PC-3 (cell line): ENCODE measurements at regions of chr9 and their contacts with region 1.

Region 1: DNA sequence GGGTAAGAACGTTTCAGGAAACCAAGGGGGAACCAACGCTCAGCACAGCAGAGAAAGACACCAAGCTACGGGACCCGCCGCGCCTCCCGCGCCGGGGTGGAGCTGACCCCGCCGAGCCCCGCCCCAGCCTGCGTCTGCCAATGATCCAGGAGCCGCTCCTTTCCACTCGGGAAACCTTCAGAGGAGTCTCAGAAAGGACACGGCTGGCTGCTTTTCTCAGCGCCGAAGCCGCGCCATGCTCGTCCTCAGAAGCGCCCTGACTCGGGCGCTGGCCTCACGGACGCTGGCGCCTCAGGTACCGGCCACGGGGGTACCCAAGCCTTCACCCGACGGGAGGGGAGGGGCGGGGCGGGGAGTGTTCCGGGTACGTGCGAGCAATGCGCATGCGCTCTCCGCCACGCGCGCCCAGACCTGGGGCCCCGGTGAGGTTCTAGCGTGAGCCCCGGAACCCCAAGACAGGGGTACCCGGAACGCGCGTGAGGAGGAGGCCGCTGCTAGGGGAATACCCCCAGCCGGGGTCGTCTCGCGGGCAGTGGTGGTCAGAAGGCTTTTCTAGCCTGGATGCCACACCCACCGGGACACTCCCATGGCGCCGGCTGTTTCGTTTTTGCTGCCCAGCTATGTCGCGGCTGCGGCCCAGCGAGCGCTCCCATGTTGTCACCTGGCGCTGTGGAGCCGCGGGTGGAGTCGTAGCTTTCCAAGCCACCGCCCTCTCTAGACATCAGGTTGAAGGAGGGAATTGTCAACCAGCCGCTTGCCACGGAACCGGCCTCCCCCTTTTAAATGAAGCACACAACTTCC is at the start of gene NIPSNAP3A:
- DNase-seq: peak; percentile 62
- ATAC-seq: peak; percentile 86
- H3K4me3 ChIP-seq: peak within 1 kb of the TSS; percentile 88
- H3K27ac ChIP-seq: peak within 1 kb of the TSS; percentile 76
- H3K4me1 ChIP-seq: peaks cover 13% of the 10 kb centered on the region
- H3K27me3 ChIP-seq: no peaks in the 10 kb centered on the region
- CTCF ChIP-seq: no peak
- total RNA-seq, gene NIPSNAP3A: 8.6 and 9.1 TPM in 2 replicates

Region 2: GRCh38 chr9:103397868-103398600 is 1349.7 kb before region 1 on chr9:
- CTCF ChIA-PET with region 1: no interaction called
- POLR2A ChIA-PET with region 1: no interaction called
- intact Hi-C with region 1: loop called (anchors 5 kb)
- DNase-seq: peak; percentile 45
- ATAC-seq: peak; percentile 50
- H3K4me3 ChIP-seq: no peak overlapping the region
- H3K27ac ChIP-seq: no peak overlapping the region
- H3K4me1 ChIP-seq: no peaks in the 10 kb centered on the region
- H3K27me3 ChIP-seq: no peaks in the 10 kb centered on the region
- CTCF ChIP-seq: peak; percentile 57; the same call in 1 of the 2 replicates

Region 3: DNA sequence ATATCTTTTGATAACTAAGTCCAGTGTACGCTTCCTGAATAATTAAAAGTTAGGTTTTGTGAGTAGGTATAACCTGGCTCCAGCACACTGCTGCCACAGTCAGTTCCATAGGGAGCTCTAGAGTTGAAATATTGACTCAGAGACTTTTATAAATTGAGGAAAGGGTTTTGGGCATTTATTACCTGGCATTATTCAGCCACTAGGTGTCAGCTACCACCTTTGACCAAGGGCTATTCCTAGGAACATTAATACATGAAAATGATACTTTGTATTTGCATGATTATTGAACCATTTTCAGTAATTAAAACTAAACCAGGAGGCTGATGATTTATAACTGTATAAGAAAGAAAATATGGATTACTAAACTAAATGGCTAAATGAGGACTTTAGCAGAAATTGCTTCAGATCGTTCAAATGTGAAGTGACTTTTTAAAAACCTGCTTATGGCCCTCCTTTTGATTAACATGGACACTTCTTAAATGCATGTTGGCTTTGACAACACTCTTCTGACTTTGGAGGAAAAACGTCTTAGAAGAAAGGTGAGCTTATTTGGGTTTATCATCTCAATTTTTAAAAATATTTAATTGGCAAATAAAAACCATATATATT is 570.7 kb before region 1 on chr9:
- CTCF ChIA-PET with region 1: no interaction called
- POLR2A ChIA-PET with region 1: no interaction called
- intact Hi-C with region 1: loop called (anchors 1 kb)
- DNase-seq: peak; percentile 42
- ATAC-seq: 0 out of 2 replicates have a peak, but pooled peaks have one; percentile 27
- H3K4me3 ChIP-seq: no peak overlapping the region
- H3K27ac ChIP-seq: no peak overlapping the region
- H3K4me1 ChIP-seq: no peaks in the 10 kb centered on the region
- H3K27me3 ChIP-seq: no peaks in the 10 kb centered on the region
- CTCF ChIP-seq: peak; percentile 58

Region 4: DNA sequence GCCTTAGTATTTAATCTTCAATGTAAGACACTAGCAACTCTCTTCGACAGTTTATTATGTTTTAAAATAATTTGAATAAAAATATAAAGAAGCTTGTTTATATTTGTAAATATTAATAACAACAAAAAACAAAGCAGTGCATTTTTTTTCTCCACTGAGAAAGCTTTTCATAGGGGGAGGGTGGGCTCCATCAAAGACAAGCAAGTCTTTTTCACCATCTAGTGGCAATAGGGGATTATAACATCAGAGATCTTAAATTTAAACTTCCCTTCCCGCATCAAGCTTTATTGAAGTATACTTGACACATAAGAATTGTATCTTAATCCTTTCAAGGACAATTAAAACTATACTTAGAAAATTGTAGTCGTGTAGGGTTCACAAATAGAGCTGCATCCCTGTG is 252.9 kb before region 1 on chr9:
- CTCF ChIA-PET with region 1: no interaction called
- POLR2A ChIA-PET with region 1: no interaction called
- intact Hi-C with region 1: loop called (anchors 1 kb)
- DNase-seq: peak; percentile 33
- ATAC-seq: no peak
- H3K4me3 ChIP-seq: no peak overlapping the region
- H3K27ac ChIP-seq: no peak overlapping the region
- H3K4me1 ChIP-seq: no peaks in the 10 kb centered on the region
- H3K27me3 ChIP-seq: no peaks in the 10 kb centered on the region
- CTCF ChIP-seq: peak; percentile 44

Region 5: DNA sequence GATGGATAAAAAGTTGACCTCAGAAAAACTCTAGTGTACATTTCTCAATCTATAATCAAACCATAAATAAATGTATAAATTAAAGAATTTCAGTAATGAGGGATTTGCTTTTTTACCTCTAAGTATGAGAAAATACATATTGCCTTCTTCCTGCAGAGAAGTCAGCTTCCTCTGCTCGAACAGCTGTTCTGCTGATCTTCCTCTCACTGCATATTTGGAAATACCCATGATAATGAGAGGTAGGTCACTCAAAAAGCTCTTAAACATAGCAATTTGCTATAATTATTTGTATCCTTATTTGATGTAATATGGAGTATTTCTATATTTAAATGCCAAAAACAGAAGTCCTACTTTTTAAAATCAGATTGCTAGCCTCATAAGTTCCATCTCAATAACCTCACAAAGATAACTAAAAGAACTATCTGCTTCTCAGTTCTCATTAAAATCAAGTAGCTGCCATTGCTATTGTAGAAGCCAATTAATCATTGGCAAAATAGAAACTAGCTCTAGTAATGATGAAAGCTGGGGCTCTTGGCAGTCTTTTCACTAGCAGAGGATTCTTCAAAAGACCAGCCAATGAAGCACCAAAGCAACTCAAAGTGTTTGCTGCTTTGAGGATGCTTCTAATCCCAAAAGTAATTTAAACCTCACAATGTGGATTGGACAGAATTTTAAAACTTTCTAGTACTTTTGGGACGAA is 89.1 kb before region 1 on chr9:
- CTCF ChIA-PET with region 1: no interaction called
- POLR2A ChIA-PET with region 1: no interaction called
- intact Hi-C with region 1: no loop called
- DNase-seq: no peak
- ATAC-seq: no peak
- H3K4me3 ChIP-seq: no peak overlapping the region
- H3K27ac ChIP-seq: no peak overlapping the region
- H3K4me1 ChIP-seq: no peaks in the 10 kb centered on the region
- H3K27me3 ChIP-seq: no peaks in the 10 kb centered on the region
- CTCF ChIP-seq: no peak

Region 6: GRCh38 chr9:104682642-104683041 is 65.1 kb before region 1 on chr9:
- CTCF ChIA-PET with region 1: no interaction called
- POLR2A ChIA-PET with region 1: no interaction called
- intact Hi-C with region 1: loop called (anchors 1 kb)
- DNase-seq: peak; percentile 66
- ATAC-seq: peak; percentile 67
- H3K4me3 ChIP-seq: no peak overlapping the region
- H3K27ac ChIP-seq: no peak overlapping the region
- H3K4me1 ChIP-seq: no peaks in the 10 kb centered on the region
- H3K27me3 ChIP-seq: no peaks in the 10 kb centered on the region
- CTCF ChIP-seq: peak; percentile 65